ENCODE measurements at regions of chr19 and their contacts with region 1.

Region 1: GRCh38 chr19:47735131-47735530 is 10.2 kb upstream of the NOP53 start:
- DNase-seq: no peak
- ATAC-seq: no peak
- H3K4me3 ChIP-seq: no peak overlapping the region
- H3K27ac ChIP-seq: no peak overlapping the region
- H3K4me1 ChIP-seq: no peaks in the 10 kb centered on the region
- H3K27me3 ChIP-seq: no peaks in the 10 kb centered on the region
- CTCF ChIP-seq: no peak

Region 2: DNA sequence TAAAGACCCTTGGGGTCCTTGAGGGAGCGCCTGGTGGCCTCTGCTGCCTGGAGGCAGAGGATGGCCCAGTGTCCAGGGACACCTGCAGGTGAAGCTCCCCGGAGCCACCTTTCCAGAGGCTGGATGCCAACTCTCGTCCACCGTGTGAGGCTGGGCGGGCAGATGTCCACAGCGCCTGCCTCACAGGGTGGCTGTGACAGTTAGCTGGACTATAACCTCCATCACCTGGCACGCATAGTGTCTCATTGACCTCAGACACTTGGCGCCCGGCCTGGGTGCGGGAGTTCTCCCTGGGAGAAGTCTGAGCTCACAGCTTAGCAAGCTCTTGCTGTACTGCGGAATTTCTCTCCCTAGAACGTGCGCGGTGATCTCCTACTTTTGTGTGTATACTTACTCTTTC is 116.4 kb before region 1 on chr19:
- CTCF ChIA-PET with region 1: no interaction called
- POLR2A ChIA-PET with region 1: interaction called, 12 read pairs
- in situ Hi-C with region 1: no loop called
- intact Hi-C with region 1: no loop called
- DNase-seq: no peak
- ATAC-seq: no peak; the same call in 1 of the 2 replicates
- H3K4me3 ChIP-seq: no peak overlapping the region
- H3K27ac ChIP-seq: no peak overlapping the region
- H3K4me1 ChIP-seq: peaks cover 13% of the 10 kb centered on the region
- H3K27me3 ChIP-seq: no peaks in the 10 kb centered on the region
- CTCF ChIP-seq: no peak

Measured in Panc1 (cell line).